Right ventricle myocardium inferior (tissue), 1 donor: ENCODE measurements at regions of chr2 and their contacts with region 1.

Region 1: DNA sequence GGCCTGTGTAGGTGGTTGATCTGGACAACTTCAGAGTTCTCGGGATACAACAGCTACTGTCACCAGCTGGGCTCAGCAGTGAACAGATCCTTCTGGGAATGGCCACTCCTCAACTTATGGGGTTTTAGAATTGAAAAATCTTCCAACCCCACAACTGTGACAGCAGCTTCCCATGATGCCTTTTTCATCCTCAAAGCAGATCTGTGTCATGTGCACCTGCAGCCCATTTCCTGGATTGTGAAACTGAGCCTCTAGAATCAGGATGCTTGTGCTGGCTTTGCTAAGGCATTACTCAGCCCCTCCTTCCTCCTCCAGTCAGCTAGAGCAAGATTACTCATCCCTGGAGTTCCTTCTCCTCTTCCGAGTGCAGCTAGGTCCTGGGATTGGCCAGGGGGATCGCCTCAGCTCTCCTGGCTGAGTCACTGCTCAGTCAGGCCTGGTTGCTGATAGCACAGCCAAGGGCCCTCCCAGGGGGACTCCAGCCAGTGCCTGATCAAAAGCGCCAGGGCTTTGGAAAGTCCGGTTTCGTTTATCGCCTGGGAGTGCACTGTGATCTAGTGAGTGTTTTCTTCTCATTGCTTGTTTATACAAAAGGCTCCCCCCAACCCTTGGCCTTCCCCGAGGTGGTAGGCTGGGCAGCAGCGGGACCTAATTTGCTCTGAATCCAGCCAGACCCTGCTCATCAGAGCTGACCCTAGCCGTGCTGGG is 2.4 kb upstream of the LPIN1 start:
- DNase-seq: peak; percentile 95
- ATAC-seq: peak; percentile 92

Region 2: GRCh38 chr2:11688222-11689069 is 55.6 kb before region 1 on chr2:
- intact Hi-C with region 1: loop called (anchors 2 kb)
- DNase-seq: peak; percentile 88
- ATAC-seq: peak; percentile 85